ENCODE measurements at regions of chr7 and their contacts with region 1.

Region 1: GRCh38 chr7:30617359-30617758 is 22.7 kb downstream of the GARS1 start:
- DNase-seq: no peak
- H3K4me3 ChIP-seq: no peak overlapping the region
- H3K27ac ChIP-seq: no peak overlapping the region
- H3K4me1 ChIP-seq: no peaks in the 10 kb centered on the region
- H3K27me3 ChIP-seq: no peaks in the 10 kb centered on the region
- CTCF ChIP-seq: no peak
- EP300 ChIP-seq: no peak
- RAD21 ChIP-seq: no peak

Region 2: GRCh38 chr7:30604901-30605300 is 12.5 kb before region 1 on chr7:
- CTCF ChIA-PET with region 1: interaction called, 10 read pairs
- POLR2A ChIA-PET with region 1: no interaction called
- DNase-seq: no peak
- H3K4me3 ChIP-seq: no peak overlapping the region
- H3K27ac ChIP-seq: no peak overlapping the region
- H3K4me1 ChIP-seq: peaks cover 0 to 2% of the 10 kb centered on the region in 2 experiments; a peak in 2 of 4 replicates
- H3K27me3 ChIP-seq: no peaks in the 10 kb centered on the region
- CTCF ChIP-seq: no peak
- EP300 ChIP-seq: no peak
- RAD21 ChIP-seq: no peak